Activated CD8-positive, alpha-beta T cell treated with anti-CD3 and anti-CD28 coated beads, Interleukin-2, amount 10 ng/mL, durations not matched to agents 7 days and 5 days (primary cell): ENCODE measurements at regions of chr19 and their contacts with region 1.

Region 1: DNA sequence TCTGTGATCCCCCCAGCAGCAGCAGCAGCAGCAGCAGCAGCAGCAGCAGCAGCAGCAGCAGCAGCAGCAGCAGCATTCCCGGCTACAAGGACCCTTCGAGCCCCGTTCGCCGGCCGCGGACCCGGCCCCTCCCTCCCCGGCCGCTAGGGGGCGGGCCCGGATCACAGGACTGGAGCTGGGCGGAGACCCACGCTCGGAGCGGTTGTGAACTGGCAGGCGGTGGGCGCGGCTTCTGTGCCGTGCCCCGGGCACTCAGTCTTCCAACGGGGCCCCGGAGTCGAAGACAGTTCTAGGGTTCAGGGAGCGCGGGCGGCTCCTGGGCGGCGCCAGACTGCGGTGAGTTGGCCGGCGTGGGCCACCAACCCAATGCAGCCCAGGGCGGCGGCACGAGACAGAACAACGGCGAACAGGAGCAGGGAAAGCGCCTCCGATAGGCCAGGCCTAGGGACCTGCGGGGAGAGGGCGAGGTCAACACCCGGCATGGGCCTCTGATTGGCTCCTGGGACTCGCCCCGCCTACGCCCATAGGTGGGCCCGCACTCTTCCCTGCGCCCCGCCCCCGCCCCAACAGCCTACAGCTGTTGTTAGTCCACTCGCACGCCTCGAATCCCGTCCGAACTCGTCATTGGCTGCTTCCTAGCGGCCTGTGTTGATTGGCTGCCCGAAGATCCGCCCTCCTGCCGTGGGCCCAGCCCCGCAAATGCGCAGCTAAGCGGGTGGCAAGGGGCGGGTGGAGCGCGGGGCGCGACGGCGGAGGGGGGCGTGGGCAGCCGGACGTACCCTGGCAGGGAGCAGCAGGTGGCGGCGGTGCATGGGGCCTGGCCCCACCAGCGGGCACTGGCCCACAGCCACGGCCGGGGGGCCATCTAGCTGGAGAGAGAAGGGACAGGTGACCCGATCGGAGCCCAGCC is 1.4 kb upstream of the SIX5 start:
- DNase-seq: peak; percentile 91
- ATAC-seq: peak; percentile 78
- H3K4me3 Mint-ChIP-seq: peak overlapping the region; percentile 81
- H3K27ac Mint-ChIP-seq: peak overlapping the region; percentile 74
- H3K4me1 Mint-ChIP-seq: peaks cover 23% of the 10 kb centered on the region
- H3K27me3 Mint-ChIP-seq: peaks cover 29% of the 10 kb centered on the region

Region 2: GRCh38 chr19:45717166-45717982 is 53.1 kb before region 1 on chr19:
- CTCF ChIA-PET with region 1: interaction called, 12 read pairs
- POLR2A ChIA-PET with region 1: interaction called, 4 read pairs
- DNase-seq: peak; percentile 99
- ATAC-seq: peak; percentile 99
- H3K4me3 Mint-ChIP-seq: peak overlapping the region; percentile 93
- H3K27ac Mint-ChIP-seq: peak overlapping the region; percentile 89
- H3K4me1 Mint-ChIP-seq: peaks cover 38% of the 10 kb centered on the region
- H3K27me3 Mint-ChIP-seq: no peaks in the 10 kb centered on the region

Region 3: DNA sequence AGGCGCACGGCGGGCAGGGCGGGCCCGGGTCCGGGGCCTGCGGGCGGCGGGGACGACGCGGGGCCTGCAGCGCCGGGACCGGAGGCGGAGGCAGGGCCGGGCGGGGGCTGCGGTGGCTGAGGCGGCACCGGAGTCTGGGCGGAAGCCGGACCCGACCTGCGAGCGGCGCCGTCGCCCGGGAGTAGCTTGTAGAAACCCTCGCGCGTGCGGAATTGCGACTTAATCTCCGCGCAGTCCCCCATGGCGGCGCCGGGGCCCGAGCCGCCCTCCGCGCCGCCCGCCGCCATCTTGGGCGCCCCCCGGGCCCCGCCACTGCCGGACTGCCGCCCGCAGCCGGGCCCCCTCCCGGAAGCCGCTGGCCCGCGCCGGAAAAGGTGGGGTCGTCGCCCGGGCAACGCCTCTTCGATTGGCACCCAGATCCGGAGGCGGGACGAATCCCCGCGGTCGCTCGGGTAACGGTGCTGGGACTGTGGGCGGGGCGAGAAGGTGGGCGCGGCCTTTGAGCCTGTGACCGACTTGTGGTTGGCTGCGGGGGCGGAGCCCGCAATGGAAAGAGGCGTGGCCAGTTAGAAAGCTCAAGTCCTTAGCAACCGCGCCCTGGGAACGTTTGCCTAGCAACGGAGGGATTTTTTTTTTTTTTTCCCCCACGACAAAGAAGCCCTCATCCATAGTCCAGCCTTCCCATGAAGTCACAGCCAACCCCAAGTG is 22.2 kb after region 1 on chr19 and contains the start of gene DMWD:
- CTCF ChIA-PET with region 1: interaction called, 238 read pairs
- POLR2A ChIA-PET with region 1: interaction called, 6 read pairs
- DNase-seq: peak; percentile 100
- ATAC-seq: peak; percentile 85
- H3K4me3 Mint-ChIP-seq: peak within 1 kb of the TSS; percentile 82
- H3K27ac Mint-ChIP-seq: peak within 1 kb of the TSS; percentile 84
- H3K4me1 Mint-ChIP-seq: peaks cover 27% of the 10 kb centered on the region
- H3K27me3 Mint-ChIP-seq: peaks cover 49% of the 10 kb centered on the region
- total RNA-seq, gene DMWD: 20.6 TPM

Region 4: DNA sequence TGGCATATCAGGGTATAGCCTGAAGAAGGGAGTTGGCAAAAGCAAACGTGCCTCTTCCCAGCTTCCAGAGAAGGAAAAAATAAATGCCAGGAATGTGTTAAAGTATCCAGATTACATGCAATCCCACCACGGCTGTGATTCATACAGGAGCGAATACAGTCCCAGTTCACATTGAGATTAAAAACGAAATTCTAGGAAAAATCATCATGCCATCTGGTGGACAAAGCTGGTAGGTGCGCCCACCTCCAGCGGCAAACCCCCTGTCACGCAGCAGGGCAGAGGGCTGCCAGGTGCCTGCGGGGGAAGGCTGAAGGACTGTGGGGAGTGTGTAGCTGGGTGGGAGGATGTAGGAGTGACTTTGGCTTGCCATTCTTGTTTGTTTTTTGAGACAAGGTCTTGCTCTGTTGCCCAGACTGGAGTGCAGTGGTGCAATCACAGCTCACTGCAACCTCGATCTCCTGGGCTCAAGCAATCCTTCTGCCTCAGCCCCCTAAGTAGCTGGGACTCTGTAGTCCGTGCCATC is 28.6 kb after region 1 on chr19:
- CTCF ChIA-PET with region 1: interaction called, 238 read pairs
- POLR2A ChIA-PET with region 1: interaction called, 8 read pairs
- DNase-seq: peak; percentile 65
- ATAC-seq: peak; percentile 66
- H3K4me3 Mint-ChIP-seq: no peak overlapping the region
- H3K27ac Mint-ChIP-seq: no peak overlapping the region
- H3K4me1 Mint-ChIP-seq: peaks cover 5% of the 10 kb centered on the region
- H3K27me3 Mint-ChIP-seq: peaks cover 34% of the 10 kb centered on the region

Region 5: DNA sequence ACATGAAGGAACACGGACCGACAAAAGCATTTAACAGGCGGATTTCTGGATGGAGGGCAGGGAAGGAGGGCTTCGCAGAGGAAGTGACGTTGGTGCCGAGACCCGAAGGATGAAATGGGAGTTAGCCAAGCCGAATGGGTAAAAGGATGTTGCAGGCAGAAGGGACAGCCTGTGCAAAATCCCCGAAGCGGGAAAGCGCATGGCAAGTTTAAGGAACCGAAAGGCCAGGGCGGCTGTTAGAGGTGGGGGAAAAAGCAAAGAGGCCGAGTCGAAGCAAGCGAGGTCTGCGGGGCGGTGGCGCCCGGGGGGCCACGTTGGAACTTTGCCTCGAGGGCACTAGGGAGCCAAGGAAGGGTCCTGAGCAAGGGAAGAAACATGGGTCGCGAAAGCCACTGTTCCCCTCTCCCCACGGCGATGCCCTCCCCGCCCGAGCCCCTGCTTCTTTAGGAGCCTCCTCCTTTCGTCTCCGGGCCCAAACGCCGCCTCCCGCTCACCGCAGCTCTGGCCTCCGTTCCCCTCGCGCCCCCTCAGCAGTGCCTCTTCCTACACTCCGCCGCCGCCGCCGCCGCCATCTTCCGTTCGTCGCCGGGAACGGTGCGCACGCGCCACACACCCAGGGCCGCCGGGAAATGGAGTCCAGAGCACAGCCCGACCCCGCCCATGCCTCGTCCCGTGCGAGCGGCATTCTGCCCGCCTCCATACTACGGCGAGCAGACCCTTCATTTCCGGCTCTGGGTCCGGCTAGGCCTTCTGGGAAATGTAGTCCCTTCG is 92.3 kb after region 1 on chr19 and contains the start of gene SYMPK:
- CTCF ChIA-PET with region 1: interaction called, 21 read pairs
- POLR2A ChIA-PET with region 1: no interaction called
- DNase-seq: peak; percentile 99
- ATAC-seq: peak; percentile 96
- H3K4me3 Mint-ChIP-seq: peak within 1 kb of the TSS; percentile 87
- H3K27ac Mint-ChIP-seq: peak within 1 kb of the TSS; percentile 98
- H3K4me1 Mint-ChIP-seq: peaks cover 33% of the 10 kb centered on the region
- H3K27me3 Mint-ChIP-seq: peaks cover 24% of the 10 kb centered on the region
- total RNA-seq, gene SYMPK: 97.3 to 98.3 TPM

Region 6: GRCh38 chr19:45886427-45887199 is 116.2 kb after region 1 on chr19:
- CTCF ChIA-PET with region 1: interaction called, 23 read pairs
- POLR2A ChIA-PET with region 1: no interaction called
- DNase-seq: peak; percentile 96
- ATAC-seq: peak; percentile 82
- H3K4me3 Mint-ChIP-seq: peak overlapping the region; percentile 90
- H3K27ac Mint-ChIP-seq: peak overlapping the region; percentile 97
- H3K4me1 Mint-ChIP-seq: peaks cover 29% of the 10 kb centered on the region
- H3K27me3 Mint-ChIP-seq: no peaks in the 10 kb centered on the region

Region 7: GRCh38 chr19:45902651-45903625 is 132.5 kb after region 1 on chr19:
- CTCF ChIA-PET with region 1: interaction called, 16 read pairs
- POLR2A ChIA-PET with region 1: no interaction called
- DNase-seq: peak; percentile 99
- ATAC-seq: peak; percentile 89
- H3K4me3 Mint-ChIP-seq: peak overlapping the region; percentile 92
- H3K27ac Mint-ChIP-seq: peak overlapping the region; percentile 77
- H3K4me1 Mint-ChIP-seq: peaks cover 28% of the 10 kb centered on the region
- H3K27me3 Mint-ChIP-seq: peaks cover 8% of the 10 kb centered on the region

Region 8: GRCh38 chr19:45971260-45971902 is 200.9 kb after region 1 on chr19:
- CTCF ChIA-PET with region 1: no interaction called
- POLR2A ChIA-PET with region 1: no interaction called
- DNase-seq: no peak
- ATAC-seq: no peak
- H3K4me3 Mint-ChIP-seq: no peak overlapping the region
- H3K27ac Mint-ChIP-seq: no peak overlapping the region
- H3K4me1 Mint-ChIP-seq: peaks cover 19% of the 10 kb centered on the region
- H3K27me3 Mint-ChIP-seq: peaks cover 52% of the 10 kb centered on the region